ENCODE measurements at regions of chr1 and their contacts with region 1.

Region 1: DNA sequence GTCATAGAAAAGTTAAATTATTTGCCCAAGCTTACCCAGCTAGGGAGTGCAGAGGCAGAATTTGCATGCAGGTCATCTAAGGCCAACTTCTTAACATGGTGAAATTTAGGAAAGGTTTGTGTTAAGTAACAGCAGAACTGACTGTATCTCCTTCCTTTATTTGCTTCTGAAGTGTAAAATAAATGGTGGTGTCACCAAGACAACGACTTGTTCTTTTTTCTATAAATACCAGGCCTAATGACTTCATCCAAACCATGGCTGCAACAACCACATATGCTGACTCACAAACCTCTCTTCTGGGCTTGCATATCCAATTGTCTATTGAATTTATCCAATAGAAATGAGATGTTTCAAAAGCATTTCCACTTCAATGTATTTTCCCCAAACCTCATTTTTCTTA is 19.1 kb downstream of the COL24A1 start:
- DNase-seq: no peak
- H3K4me3 ChIP-seq: no peak overlapping the region
- H3K27ac ChIP-seq: no peak overlapping the region
- H3K4me1 ChIP-seq: no peaks in the 10 kb centered on the region
- H3K27me3 ChIP-seq: no peaks in the 10 kb centered on the region
- CTCF ChIP-seq: no peak
- POLR2A ChIP-seq: no peak

Region 2: GRCh38 chr1:85109475-85109874 is 1028.0 kb before region 1 on chr1:
- intact Hi-C with region 1: loop called (anchors 5 kb)
- DNase-seq: peak; percentile 21 to 56
- H3K4me3 ChIP-seq: no peak overlapping the region
- H3K27ac ChIP-seq: no peak overlapping the region
- H3K4me1 ChIP-seq: no peaks in the 10 kb centered on the region
- H3K27me3 ChIP-seq: no peaks in the 10 kb centered on the region
- CTCF ChIP-seq: peak; percentile 43 to 84 (median 83)
- POLR2A ChIP-seq: no peak

Region 3: DNA sequence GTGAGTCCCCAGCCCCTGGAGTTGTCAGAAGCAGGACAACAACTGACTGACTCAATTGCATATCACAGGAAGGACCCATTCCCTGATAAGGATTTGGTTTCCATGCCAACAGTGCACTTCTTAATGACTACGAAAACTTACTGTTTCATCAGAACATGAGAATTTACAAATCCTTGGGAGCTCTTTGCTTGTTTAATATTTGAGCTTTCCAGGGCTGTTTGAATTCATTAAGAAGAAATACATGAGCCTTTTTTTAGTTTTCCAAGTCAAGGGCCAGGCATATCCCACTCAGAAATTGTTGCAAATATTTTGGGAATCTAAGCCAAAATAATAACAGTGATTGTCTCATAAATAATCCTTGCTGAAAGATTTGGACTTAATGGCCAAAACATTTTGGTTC is 46.4 kb after region 1 on chr1:
- intact Hi-C with region 1: no loop called
- DNase-seq: no peak
- H3K4me3 ChIP-seq: no peak overlapping the region
- H3K27ac ChIP-seq: no peak overlapping the region
- H3K4me1 ChIP-seq: no peaks in the 10 kb centered on the region
- H3K27me3 ChIP-seq: no peaks in the 10 kb centered on the region
- CTCF ChIP-seq: no peak
- POLR2A ChIP-seq: no peak

Region 4: DNA sequence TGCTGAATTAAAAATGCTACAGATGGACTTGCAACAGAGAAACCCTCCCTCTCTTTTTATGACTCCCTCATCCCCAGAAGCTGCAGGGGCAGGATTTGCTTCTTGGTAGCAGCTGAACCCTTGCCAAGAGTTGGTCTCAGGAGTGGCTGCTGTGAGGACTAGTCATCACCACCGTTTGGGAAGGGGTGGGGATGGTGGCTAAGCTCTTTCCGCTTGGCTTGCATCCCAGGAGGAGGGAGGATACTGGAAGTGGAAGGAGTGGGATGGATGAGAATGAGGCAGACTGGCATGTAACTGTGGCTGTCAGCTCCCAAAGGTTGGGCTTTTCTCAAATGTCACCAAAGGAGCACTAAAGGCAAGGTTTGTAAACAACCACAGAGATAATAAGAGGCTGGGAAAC is 69.9 kb after region 1 on chr1:
- intact Hi-C with region 1: no loop called
- DNase-seq: no peak
- H3K4me3 ChIP-seq: no peak overlapping the region
- H3K27ac ChIP-seq: no peak overlapping the region
- H3K4me1 ChIP-seq: no peaks in the 10 kb centered on the region
- H3K27me3 ChIP-seq: no peaks in the 10 kb centered on the region
- CTCF ChIP-seq: no peak
- POLR2A ChIP-seq: no peak

Measured in breast epithelium (tissue), 4 donors.